B cell (primary cell): ENCODE measurements at regions of chr10 and their contacts with region 1.

Region 1: DNA sequence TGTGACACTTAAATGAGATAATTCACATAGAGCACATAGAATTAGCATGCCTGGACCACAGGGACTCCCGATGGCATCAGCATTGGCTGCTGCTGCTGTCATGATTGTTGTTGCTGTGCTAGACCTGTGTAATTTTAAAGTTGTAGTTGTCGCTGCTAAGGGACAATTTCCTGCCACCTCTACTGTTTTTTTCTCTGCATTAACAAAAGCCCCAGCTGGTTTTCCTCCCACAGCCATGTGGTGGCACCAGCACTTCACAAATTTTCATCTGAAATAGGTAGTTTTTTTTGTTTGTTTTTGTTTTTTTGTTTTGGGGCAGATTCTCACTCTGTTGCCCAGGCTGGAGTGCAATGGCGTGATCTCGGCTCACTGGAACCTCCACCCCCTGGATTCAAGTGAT is 25.4 kb upstream of the PRXL2A start:
- DNase-seq: peak; percentile 60
- ATAC-seq: peak; percentile 54
- H3K4me3 ChIP-seq: no peak overlapping the region
- H3K4me3 Mint-ChIP-seq: no peak overlapping the region
- H3K27ac ChIP-seq: no peak overlapping the region
- H3K27ac Mint-ChIP-seq: no peak overlapping the region
- H3K4me1 ChIP-seq: peaks cover 4 to 6% of the 10 kb centered on the region in 2 donors
- H3K4me1 Mint-ChIP-seq: peaks cover 8% of the 10 kb centered on the region
- H3K27me3 ChIP-seq: peaks cover 0 to 3% (median 1%) of the 10 kb centered on the region in 4 experiments
- H3K27me3 Mint-ChIP-seq: peaks cover 5% of the 10 kb centered on the region
- CTCF ChIP-seq: peak; percentile 79

Region 2: GRCh38 chr10:80126876-80127275 is 256.1 kb before region 1 on chr10:
- CTCF ChIA-PET with region 1: no interaction called
- POLR2A ChIA-PET with region 1: no interaction called
- intact Hi-C with region 1: no loop called
- DNase-seq: no peak
- ATAC-seq: no peak
- H3K4me3 ChIP-seq: no peak overlapping the region
- H3K4me3 Mint-ChIP-seq: no peak overlapping the region
- H3K27ac ChIP-seq: no peak overlapping the region
- H3K27ac Mint-ChIP-seq: no peak overlapping the region
- H3K4me1 ChIP-seq: no peaks in the 10 kb centered on the region
- H3K4me1 Mint-ChIP-seq: no peaks in the 10 kb centered on the region
- H3K27me3 ChIP-seq: peaks cover 0 to 8% (median 0%) of the 10 kb centered on the region in 4 experiments
- H3K27me3 Mint-ChIP-seq: peaks cover 10% of the 10 kb centered on the region
- CTCF ChIP-seq: no peak

Region 3: DNA sequence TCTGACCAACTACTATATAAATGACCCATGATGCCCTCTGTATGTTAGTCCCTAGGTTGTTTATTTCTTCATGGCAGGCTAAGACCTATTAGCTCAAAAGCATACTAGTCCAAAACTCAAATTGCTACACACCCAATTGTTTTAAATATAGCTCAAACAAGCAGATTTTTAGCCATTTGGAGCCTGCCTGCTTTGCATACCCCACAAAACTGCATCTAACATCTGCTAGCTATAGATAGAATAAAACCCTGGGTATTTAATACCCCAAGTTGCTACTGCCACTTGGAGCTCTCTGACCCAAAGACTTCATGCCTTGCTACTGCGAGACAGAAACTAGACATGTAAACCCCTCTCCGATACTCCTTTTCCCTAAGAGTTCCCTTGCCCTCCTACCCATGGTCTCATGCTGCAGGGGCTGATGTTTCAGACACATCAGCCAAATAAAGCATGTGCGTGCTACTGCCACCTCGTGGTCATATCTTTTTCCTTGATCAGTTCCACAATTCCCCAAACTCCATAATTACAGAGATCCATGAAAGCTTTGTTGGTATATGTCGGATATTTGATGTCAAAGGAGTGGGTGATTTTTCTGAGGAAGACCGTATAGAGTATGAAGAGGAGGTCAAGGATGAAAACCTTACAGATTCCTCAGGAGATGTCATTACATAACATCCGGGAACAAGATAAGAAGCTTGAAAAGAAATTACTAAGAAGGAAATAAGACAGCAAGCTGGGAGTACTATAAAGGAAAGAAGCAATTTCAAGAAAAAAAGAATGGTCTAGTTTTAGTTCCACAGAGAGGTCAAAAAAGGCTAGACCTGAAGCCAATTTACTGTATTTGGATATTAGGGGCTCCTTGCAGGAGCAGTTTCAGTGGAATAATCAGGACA is 541.3 kb after region 1 on chr10:
- CTCF ChIA-PET with region 1: interaction called, 15 read pairs
- POLR2A ChIA-PET with region 1: no interaction called
- intact Hi-C with region 1: loop called (anchors 1 kb)
- DNase-seq: peak; percentile 35
- ATAC-seq: no peak
- H3K4me3 ChIP-seq: no peak overlapping the region
- H3K4me3 Mint-ChIP-seq: no peak overlapping the region
- H3K27ac ChIP-seq: no peak overlapping the region
- H3K27ac Mint-ChIP-seq: no peak overlapping the region
- H3K4me1 ChIP-seq: no peaks in the 10 kb centered on the region
- H3K4me1 Mint-ChIP-seq: no peaks in the 10 kb centered on the region
- H3K27me3 ChIP-seq: no peaks in the 10 kb centered on the region
- H3K27me3 Mint-ChIP-seq: peaks cover 5% of the 10 kb centered on the region
- CTCF ChIP-seq: peak; percentile 61